SK-N-SH (cell line): ENCODE measurements at regions of chr22 and their contacts with region 1.

Region 1: DNA sequence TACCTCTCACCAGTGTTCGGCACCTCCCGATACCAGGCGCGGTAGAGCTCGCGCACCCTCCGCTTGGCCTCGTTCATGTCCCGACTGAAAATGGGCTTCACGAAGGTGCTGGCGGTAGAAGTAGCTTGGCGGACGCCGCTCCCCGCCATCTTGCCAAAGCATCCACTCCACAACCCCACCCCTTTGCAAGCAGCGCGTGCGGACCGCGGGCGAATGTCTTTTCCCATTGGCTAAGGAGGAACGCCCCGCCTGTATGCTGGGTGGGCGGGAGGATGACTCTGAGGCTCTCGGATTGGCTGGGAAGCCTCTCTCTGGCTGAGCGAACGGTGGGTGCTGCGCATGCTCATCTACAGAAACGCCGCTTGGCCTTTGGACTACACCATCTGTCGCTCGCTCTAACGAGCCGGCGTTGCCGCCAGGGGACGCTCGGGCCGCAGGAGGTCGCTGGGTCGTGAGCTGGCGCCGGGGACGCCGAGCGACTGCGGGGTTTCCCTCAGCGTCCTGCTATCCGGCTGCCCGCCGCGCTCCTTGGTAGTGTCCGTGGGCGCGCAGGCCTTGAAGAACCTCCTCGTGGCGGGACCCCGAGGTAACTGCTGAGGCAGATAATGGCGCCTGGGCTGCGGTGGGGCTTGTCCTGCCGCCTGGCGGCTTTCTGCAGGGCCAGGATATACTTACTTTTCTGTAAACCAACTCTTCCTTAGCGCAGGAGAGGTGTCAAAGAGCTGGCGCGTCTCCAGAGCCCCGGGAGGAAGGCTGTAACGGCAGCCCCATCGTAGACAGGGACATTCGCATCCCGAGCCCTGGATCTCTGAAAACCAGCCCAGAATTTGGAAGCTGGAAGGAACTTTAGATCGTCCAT is at the start of gene NDUFA6:
- DNase-seq: peak; percentile 91
- H3K4me3 ChIP-seq: peak within 1 kb of the TSS; percentile 70 to 74
- H3K27ac ChIP-seq: peak within 1 kb of the TSS; percentile 72 to 84
- H3K4me1 ChIP-seq: peaks cover 0 to 4% of the 10 kb centered on the region in 2 experiments; a peak in 1 of 4 replicates
- H3K27me3 ChIP-seq: no peaks in the 10 kb centered on the region
- CTCF ChIP-seq: peak; percentile 65
- EP300 ChIP-seq: no peak
- RAD21 ChIP-seq: peak; percentile 70
- polyA plus RNA-seq, gene NDUFA6: 37.8 and 42.0 TPM in 2 replicates

Region 2: DNA sequence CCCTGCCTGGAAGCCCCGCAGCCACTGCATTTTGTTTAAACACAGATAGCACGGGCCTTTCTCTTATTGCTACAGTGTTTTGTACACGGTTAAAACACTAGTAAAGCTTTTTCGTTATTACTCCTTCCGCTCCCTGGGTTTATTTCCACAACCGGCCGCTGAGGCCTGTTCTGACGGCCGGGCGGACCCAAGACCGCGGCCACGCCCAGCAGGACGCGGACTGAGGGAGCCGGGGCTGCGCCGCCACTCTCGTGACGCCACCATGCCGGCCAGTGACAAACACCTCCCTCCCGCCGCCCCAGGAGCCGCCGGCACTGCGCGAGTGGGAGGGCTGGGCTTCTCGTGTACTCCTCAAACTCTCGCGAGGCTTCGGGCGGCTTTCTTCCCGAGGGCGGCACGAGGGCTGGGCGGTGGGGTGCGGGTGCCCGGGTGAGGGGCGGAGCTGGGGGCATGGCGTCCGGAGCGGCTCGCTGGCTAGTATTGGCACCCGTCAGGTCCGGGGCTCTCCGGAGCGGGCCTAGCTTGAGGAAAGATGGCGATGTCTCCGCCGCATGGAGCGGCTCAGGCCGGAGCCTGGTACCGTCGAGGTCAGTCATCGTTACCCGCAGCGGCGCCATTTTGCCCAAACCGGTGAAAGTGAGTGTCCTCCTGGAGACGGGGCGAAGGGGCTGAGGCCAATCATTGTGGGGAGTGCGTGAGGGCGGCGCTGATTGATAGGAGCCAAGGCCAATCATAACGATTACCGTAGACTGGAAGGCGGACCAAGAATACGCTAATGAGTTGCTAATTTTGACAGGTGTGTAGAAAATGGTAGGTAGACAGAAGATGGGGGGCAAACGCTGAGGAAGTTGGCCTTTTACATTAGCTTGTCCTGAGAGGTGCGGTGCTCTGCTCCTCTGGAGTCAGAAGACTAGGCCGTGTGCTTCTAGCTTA is 11.2 kb before region 1 on chr22 and contains the start of gene SMDT1:
- CTCF ChIA-PET with region 1: interaction called, 13 read pairs
- POLR2A ChIA-PET with region 1: interaction called, 8 read pairs
- DNase-seq: peak; percentile 92
- H3K4me3 ChIP-seq: peak within 1 kb of the TSS; percentile 60 to 71
- H3K27ac ChIP-seq: peak within 1 kb of the TSS; percentile 78 to 81
- H3K4me1 ChIP-seq: peaks cover 0 to 8% of the 10 kb centered on the region in 2 experiments; a peak in 2 of 4 replicates
- H3K27me3 ChIP-seq: no peaks in the 10 kb centered on the region
- CTCF ChIP-seq: no peak
- EP300 ChIP-seq: no peak
- RAD21 ChIP-seq: no peak
- polyA plus RNA-seq, gene SMDT1: 23.4 and 29.8 TPM in 2 replicates

Region 3: DNA sequence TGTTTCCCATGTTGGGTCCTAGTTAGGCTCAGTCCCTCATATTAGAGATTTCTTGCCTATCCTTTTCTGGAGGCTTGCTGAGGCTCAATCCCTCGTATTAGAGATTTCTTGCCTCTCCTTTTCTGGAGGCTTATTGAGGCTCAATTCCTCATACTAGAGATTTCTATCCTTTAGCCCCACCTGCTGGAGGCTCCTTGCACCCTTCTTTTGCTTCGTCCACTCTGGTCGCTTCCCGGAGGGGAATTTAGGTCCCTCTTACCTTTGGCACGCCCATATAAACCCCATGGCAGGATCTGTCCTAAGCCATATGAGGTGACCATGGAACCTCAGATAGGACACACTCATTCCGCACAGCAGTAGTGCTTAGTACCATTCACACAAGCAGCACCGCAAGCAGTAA is 23.9 kb after region 1 on chr22:
- CTCF ChIA-PET with region 1: interaction called, 11 read pairs
- POLR2A ChIA-PET with region 1: no interaction called
- DNase-seq: no peak
- H3K4me3 ChIP-seq: no peak overlapping the region
- H3K27ac ChIP-seq: no peak overlapping the region
- H3K4me1 ChIP-seq: no peaks in the 10 kb centered on the region
- H3K27me3 ChIP-seq: no peaks in the 10 kb centered on the region
- CTCF ChIP-seq: no peak
- EP300 ChIP-seq: no peak
- RAD21 ChIP-seq: no peak

Region 4: GRCh38 chr22:42331014-42331413 is 240.2 kb after region 1 on chr22:
- CTCF ChIA-PET with region 1: no interaction called
- POLR2A ChIA-PET with region 1: no interaction called
- DNase-seq: no peak
- H3K4me3 ChIP-seq: no peak overlapping the region
- H3K27ac ChIP-seq: no peak overlapping the region
- H3K4me1 ChIP-seq: peaks cover 0 to 8% of the 10 kb centered on the region in 2 experiments; a peak in 1 of 4 replicates
- H3K27me3 ChIP-seq: no peaks in the 10 kb centered on the region
- CTCF ChIP-seq: no peak
- EP300 ChIP-seq: no peak
- RAD21 ChIP-seq: no peak